Activated T-helper 1 cell treated with anti-CD3 and anti-CD28 coated beads, Interleukin-12 subunit alpha, Interleukin-12 subunit beta, Interleukin-2, Interleukin-4 antibody, amounts not matched to agents 30 ng/mL and 10 ng/mL and 1 ng/mL, durations not matched to agents 14 hours and 24 hours and 36 hours (primary cell): ENCODE measurements at regions of chr16 and their contacts with region 1.

Region 1: DNA sequence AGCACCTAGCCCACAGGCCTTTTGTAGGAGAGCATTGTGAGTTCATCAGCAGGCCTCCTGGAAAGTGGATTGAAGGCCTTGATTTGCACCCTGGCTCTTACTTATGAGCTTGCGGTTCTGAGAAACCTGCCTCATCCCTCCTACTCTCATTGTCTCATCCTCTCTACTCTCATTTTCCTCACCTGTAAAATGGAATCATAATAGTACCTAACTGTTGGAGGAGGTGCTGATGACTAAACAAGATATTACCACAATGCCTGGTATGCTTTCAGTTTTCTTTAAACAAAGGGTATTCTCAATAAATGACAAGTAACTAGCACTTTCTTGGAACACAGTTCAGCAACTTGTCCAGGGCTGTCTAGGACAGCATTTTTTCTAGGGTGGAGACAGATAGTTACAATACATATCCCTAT is 243.1 kb upstream of the MAF start:
- DNase-seq: no peak
- H3K4me3 Mint-ChIP-seq: peak overlapping the region; percentile 45
- H3K27ac Mint-ChIP-seq: peak overlapping the region; percentile 70
- H3K4me1 Mint-ChIP-seq: peaks cover 42% of the 10 kb centered on the region
- H3K27me3 Mint-ChIP-seq: no peaks in the 10 kb centered on the region

Region 2: GRCh38 chr16:78742501-78743283 is 1100.9 kb before region 1 on chr16:
- intact Hi-C with region 1: loop called (anchors 1 kb)
- DNase-seq: peak; percentile 70
- H3K4me3 Mint-ChIP-seq: peak overlapping the region; percentile 74
- H3K27ac Mint-ChIP-seq: peak overlapping the region; percentile 77
- H3K4me1 Mint-ChIP-seq: peaks cover 33% of the 10 kb centered on the region
- H3K27me3 Mint-ChIP-seq: peaks cover 10% of the 10 kb centered on the region

Region 3: DNA sequence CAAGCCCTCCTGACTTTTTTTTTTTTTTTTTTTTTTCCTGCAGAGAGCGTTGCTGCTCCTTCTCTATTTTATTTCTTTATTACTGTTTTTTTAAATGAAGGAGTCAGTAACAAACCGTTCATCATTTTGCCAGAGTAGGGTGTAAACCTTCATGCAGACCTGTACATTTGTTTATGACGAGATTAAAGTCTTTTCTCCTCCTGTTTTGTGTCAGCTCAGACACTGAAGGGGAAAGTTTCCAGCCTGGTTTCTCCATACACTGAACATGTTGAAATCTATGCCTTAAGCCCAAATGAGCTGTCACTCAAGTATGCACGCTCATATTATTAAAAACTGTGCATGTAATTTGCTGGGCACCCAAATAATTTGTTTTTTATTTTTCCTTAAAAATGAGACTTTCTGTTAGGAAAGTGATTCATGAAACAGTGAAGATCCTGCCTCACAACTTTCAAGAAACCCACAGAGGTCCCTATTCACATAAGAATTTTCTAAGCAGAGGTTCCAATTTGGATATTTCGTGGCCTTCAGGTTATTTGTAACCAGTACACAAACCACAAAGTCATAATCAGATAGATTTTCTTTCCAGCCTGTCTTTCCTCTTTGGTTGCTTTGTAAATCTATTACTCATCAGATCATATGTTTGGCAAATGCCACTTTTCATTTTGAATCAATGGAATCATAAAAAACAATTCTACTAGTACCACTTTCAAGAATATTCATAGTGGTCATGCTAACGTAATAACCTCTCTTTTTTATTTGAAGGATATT is 943.4 kb before region 1 on chr16:
- intact Hi-C with region 1: loop called (anchors 1 kb)
- DNase-seq: no peak
- H3K4me3 Mint-ChIP-seq: no peak overlapping the region
- H3K27ac Mint-ChIP-seq: peak overlapping the region; percentile 51
- H3K4me1 Mint-ChIP-seq: peaks cover 42% of the 10 kb centered on the region
- H3K27me3 Mint-ChIP-seq: no peaks in the 10 kb centered on the region

Region 4: DNA sequence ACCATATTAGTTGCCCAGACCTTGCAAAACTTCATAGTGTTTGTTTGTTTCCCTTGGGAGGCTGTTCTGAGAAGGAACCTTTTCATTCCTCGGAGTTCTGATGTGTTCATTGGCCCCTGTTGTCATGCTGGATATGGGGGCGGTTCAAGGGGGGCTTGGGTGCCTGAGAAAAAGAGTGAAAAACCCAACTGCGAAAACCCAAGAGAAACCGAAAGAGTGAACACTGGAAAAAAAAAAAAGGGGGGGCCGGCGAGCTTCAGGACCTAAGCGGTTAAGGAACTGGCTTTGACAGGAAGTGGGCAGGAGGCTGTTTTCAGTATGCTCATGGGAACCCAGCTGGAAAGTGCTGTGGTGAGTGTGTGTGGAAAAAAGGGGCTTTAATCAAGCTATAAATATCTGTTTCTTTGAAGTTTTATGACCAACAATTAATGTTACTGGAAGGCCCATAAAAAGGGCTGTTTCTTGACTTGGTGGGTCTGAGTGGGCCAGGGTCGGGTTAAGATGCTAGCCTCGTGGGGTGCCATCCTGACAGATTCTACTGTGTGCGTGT is 753.8 kb before region 1 on chr16:
- intact Hi-C with region 1: loop called (anchors 1 kb)
- DNase-seq: peak; percentile 66
- H3K4me3 Mint-ChIP-seq: peak overlapping the region; percentile 62
- H3K27ac Mint-ChIP-seq: peak overlapping the region; percentile 95
- H3K4me1 Mint-ChIP-seq: peaks cover 53% of the 10 kb centered on the region
- H3K27me3 Mint-ChIP-seq: no peaks in the 10 kb centered on the region

Region 5: DNA sequence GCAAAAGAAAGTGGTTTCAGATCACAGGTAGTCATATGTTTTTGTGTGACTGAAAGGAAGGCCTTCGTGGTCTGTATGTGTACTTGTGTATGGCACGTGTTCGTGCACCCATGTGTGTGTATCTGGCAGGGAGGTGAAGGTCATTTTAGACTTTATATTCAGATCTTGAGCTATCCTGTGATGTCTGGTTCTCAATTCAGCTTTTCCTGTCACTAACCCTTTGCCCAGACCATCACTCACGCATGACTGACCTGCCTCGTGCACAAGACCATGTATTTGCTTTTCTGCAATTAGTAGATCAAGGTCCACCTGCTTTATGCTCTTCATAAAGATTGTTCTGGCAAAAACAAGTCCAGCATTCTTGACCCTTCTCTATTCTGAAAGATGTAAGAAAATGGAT is 103.4 kb before region 1 on chr16:
- intact Hi-C with region 1: no loop called
- DNase-seq: no peak
- H3K4me3 Mint-ChIP-seq: no peak overlapping the region
- H3K27ac Mint-ChIP-seq: no peak overlapping the region
- H3K4me1 Mint-ChIP-seq: no peaks in the 10 kb centered on the region
- H3K27me3 Mint-ChIP-seq: no peaks in the 10 kb centered on the region

Region 6: DNA sequence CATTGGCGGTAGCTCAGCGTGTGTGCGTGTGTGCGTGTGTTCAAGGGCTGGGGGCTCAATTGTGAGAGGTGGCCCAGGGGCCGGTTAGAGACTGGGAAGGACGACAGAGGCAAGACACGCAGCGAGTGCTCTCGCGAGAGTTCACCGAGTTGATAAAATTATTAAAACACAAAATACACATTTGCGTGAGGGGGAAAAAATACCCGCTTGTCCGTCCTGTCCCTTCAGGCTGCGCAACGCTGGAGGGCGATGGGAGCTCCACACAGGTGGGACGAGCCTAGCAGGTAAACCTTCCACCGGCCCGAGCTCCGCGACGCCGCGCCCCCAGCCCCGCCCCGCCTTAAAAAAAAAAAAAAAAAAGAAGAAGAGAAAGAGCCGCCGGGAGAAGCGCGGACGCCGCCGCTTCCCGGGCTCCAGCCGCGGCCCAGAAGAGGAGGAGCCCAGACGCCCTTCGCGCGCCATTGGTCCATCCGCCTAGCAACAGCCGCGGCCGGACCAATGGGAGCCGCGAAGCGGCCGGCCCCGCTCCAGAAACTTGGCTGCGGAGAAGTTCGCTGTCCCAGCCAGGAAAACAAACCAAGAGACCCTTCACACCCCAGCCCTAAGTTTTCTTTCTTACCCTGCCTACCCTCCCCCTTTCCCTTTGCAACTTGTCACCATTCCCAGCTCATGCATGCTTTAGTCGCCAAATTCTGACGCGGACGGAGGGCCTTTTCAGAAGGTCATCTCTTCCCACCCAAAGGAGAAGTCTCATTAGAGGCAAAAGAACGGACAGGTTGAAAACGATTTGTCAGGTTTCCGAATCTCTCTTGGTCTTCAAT is 73.2 kb before region 1 on chr16:
- intact Hi-C with region 1: loop called (anchors 1 kb)
- DNase-seq: peak; percentile 71
- H3K4me3 Mint-ChIP-seq: peak overlapping the region; percentile 86
- H3K27ac Mint-ChIP-seq: peak overlapping the region; percentile 84
- H3K4me1 Mint-ChIP-seq: peaks cover 36% of the 10 kb centered on the region
- H3K27me3 Mint-ChIP-seq: no peaks in the 10 kb centered on the region

Region 7: GRCh38 chr16:80027007-80027965 is 183.6 kb after region 1 on chr16:
- intact Hi-C with region 1: loop called (anchors 2 kb)
- DNase-seq: peak; percentile 16
- H3K4me3 Mint-ChIP-seq: peak overlapping the region; percentile 51
- H3K27ac Mint-ChIP-seq: no peak overlapping the region
- H3K4me1 Mint-ChIP-seq: peaks cover 13% of the 10 kb centered on the region
- H3K27me3 Mint-ChIP-seq: no peaks in the 10 kb centered on the region

Region 8: GRCh38 chr16:80197741-80198201 is 354.1 kb after region 1 on chr16:
- intact Hi-C with region 1: loop called (anchors 5 kb)
- DNase-seq: no peak
- H3K4me3 Mint-ChIP-seq: no peak overlapping the region
- H3K27ac Mint-ChIP-seq: peak overlapping the region; percentile 33
- H3K4me1 Mint-ChIP-seq: peaks cover 4% of the 10 kb centered on the region
- H3K27me3 Mint-ChIP-seq: no peaks in the 10 kb centered on the region